Ascending aorta (tissue), 2 donors: ENCODE measurements at regions of chr20 and their contacts with region 1.

Region 1: DNA sequence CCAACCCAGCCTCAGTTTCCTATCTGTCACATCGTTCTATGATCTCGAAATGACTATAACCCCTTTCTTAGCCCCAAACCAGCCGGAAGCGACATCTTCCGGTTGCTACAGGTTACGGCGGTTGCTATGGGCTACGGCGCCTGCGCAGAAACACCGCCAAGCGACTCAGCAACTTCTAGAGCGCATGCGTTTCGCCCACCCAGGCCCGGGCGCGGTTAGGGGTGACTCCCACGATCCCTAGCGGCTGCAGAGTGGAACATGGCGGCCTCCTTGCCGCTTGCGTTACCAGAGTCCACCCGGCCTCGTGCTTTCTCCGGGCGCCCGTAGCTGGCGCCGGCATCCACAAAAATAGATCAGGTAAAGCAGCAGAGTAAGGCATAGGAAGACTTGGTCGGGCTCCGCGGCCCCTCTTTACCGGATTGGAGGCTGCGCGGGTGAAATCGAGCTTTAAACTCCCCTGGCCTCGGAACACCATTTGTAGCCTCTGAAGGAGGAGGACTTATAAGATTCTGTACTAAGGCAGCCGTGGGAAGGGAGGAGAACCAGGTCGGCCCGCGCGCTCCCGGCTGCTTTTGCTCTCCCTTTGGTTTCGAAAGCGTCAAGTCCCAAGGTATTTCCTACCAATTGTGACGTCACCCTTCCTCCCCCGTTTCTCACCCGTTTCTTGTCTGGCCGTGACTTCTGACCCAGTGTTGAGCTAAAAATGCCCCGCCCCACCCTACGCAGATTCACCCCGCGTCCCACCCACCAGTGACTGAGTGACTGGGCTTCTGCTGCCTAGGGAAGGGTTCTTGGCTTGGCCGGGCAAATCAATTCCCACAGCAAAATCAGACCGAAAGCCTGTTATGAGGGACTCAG is 3.5 kb downstream of the SDCBP2 start:
- DNase-seq: peak; percentile 90 to 99
- H3K4me3 ChIP-seq: peak overlapping the region; percentile 88
- H3K27ac ChIP-seq: peak overlapping the region; percentile 98 to 99
- H3K4me1 ChIP-seq: peaks cover 0 to 33% of the 10 kb centered on the region in 2 donors
- H3K27me3 ChIP-seq: no peaks in the 10 kb centered on the region
- CTCF ChIP-seq: peak in 2 of 3 experiments; percentile 24 to 30

Region 2: DNA sequence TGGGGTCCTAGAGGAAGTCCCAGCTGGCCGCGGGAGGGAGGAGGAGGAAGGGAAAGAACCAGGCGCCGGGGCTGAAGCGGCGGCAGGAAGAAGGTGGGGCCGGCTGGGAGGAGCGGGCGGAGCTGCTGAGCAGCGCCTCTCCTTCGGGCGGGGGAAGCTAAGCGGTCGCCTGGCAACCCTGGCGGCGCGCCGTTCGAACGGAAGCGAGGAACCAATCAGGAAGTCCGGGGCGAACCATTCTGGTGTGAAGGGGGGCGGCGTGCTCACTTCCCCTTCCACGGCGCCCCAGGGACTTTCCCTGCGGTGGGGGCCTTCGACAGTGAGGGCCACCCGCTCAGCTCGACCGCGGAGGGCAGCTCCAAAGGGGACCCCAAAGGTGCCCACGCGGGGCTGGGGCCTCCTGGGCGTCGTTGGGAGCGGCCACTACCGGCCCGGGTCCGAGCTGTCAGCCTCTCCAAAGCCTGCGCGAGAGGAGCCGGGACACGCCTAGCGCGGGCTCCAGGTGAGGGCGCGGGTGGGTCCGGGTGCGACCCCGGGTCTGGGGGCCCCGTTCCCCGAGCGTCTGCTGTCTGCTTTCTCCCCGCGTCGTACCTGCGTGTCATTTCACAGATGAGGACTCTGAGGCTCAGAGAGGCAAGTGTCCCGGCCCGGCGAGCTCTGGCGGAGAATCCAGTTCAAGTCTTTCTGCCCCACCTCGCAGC is 491.8 kb before region 1 on chr20 and contains the start of gene FAM110A:
- intact Hi-C with region 1: loop called (anchors 5 kb)
- DNase-seq: peak; percentile 87 to 97
- H3K4me3 ChIP-seq: peak within 1 kb of the TSS; percentile 90
- H3K27ac ChIP-seq: peak within 1 kb of the TSS; percentile 72 to 78
- H3K4me1 ChIP-seq: peaks cover 4 to 17% of the 10 kb centered on the region in 2 donors
- H3K27me3 ChIP-seq: no peaks in the 10 kb centered on the region
- CTCF ChIP-seq: no peak
- total RNA-seq, gene FAM110A: 9.7 TPM

Region 3: GRCh38 chr20:1118336-1119127 is 206.9 kb before region 1 on chr20 and contains the start of gene PSMF1:
- intact Hi-C with region 1: loop called (anchors 5 kb)
- DNase-seq: peak; percentile 77 to 96
- H3K4me3 ChIP-seq: peak within 1 kb of the TSS; percentile 99
- H3K27ac ChIP-seq: peak within 1 kb of the TSS; percentile 74 to 80
- H3K4me1 ChIP-seq: peaks cover 8 to 44% of the 10 kb centered on the region in 2 donors
- H3K27me3 ChIP-seq: no peaks in the 10 kb centered on the region
- CTCF ChIP-seq: peak; percentile 3 to 28 (median 10)
- total RNA-seq, gene PSMF1: 46.8 TPM

Region 4: GRCh38 chr20:1370548-1371110 is 45.2 kb after region 1 on chr20:
- intact Hi-C with region 1: loop called (anchors 5 kb)
- DNase-seq: no peak
- H3K4me3 ChIP-seq: no peak overlapping the region
- H3K27ac ChIP-seq: peak overlapping the region; percentile 26 to 67
- H3K4me1 ChIP-seq: peaks cover 9 to 30% of the 10 kb centered on the region in 2 donors
- H3K27me3 ChIP-seq: no peaks in the 10 kb centered on the region
- CTCF ChIP-seq: no peak

Region 5: DNA sequence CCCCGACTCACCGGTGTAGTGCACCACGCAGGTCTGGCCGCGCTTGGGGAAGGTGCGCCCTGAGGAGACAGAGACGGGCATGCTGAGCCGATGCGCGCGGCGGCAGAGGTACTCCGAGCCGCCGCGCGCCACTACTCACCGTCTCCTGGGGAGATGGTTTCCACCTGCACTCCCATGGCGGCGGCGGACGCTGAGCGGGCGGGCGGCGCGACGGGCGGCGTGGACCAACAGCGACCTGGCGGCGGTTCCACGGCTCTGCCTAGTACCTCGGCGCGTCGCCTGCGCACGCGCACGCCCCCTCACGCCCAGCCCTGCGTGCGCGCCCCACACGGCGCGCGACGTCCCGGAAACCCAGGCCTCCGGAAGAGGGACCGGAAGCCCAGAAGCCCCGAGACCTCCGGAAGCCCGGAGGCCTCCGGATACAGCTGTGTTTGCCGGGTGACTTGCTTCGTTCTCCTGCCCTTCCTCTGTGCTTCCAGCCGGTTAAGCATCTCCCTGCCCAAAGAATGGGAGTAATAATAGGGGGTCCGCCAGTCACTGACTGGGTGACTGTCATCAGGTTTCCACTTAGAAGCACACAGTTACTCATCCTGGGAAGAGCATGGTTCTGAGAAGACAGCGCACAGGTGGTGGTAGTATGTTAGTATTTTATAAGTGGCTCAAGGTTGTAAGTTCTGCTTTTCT is 67.6 kb after region 1 on chr20 and contains the start of gene FKBP1A:
- intact Hi-C with region 1: loop called (anchors 1 kb)
- DNase-seq: peak; percentile 51 to 94
- H3K4me3 ChIP-seq: peak within 1 kb of the TSS; percentile 80 to 92
- H3K27ac ChIP-seq: peak within 1 kb of the TSS; percentile 84 to 86
- H3K4me1 ChIP-seq: peaks cover 13 to 41% of the 10 kb centered on the region in 2 donors
- H3K27me3 ChIP-seq: no peaks in the 10 kb centered on the region
- CTCF ChIP-seq: peak in 2 of 3 experiments; percentile 13 to 19
- total RNA-seq, gene FKBP1A: 202 TPM

Region 6: GRCh38 chr20:1816384-1817381 is 491.3 kb after region 1 on chr20:
- intact Hi-C with region 1: loop called (anchors 10 kb)
- DNase-seq: no peak
- H3K4me3 ChIP-seq: peak overlapping the region in 1 of 2 donors; percentile 37
- H3K27ac ChIP-seq: peak overlapping the region; percentile 80 to 92
- H3K4me1 ChIP-seq: peaks cover 34 to 65% of the 10 kb centered on the region in 2 donors
- H3K27me3 ChIP-seq: no peaks in the 10 kb centered on the region
- CTCF ChIP-seq: no peak

Region 7: DNA sequence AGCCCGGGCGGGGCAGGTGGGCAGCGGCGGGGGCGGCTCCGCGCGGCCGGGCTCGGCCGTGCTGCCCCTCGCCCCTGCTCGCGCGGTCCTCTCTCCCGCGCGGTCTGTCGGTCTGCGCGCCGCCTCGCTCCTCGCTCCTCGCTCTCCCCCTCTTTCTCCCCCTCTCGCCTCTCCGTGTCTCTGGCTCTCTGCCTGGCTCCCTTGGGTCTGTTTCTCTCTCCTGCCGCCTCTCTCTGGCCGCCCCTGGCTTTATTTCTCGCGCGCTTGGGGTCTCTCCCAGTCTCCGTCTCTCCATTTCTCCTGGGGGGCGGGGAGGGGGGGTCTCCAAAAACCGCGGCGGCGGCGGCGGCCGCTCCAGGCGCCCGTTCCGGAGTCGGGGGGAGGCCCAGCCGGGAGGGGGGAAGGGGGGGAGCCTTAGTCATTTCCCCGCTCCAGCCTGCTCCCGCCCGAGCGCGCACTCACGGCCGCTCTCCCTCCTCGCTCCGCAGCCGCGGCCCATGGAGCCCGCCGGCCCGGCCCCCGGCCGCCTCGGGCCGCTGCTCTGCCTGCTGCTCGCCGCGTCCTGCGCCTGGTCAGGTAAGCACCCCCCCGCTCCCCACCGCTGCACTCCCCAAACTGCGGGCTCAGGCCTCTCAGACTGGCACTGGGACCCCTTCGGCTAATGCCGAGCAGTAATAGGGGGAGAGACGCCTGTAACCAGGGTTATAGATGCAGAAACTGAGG is 569.7 kb after region 1 on chr20 and contains the start of gene SIRPA:
- intact Hi-C with region 1: loop called (anchors 10 kb)
- DNase-seq: peak in 1 of 2 donors; percentile 84
- H3K4me3 ChIP-seq: peak within 1 kb of the TSS; percentile 80 to 97
- H3K27ac ChIP-seq: peak within 1 kb of the TSS; percentile 97
- H3K4me1 ChIP-seq: peaks cover 6 to 66% of the 10 kb centered on the region in 2 donors
- H3K27me3 ChIP-seq: no peaks in the 10 kb centered on the region
- CTCF ChIP-seq: no peak
- total RNA-seq, gene SIRPA: 72.8 TPM

Region 8: GRCh38 chr20:1920252-1920651 is 594.9 kb after region 1 on chr20:
- intact Hi-C with region 1: no loop called
- DNase-seq: no peak
- H3K4me3 ChIP-seq: no peak overlapping the region
- H3K27ac ChIP-seq: no peak overlapping the region
- H3K4me1 ChIP-seq: no peaks in the 10 kb centered on the region
- H3K27me3 ChIP-seq: no peaks in the 10 kb centered on the region
- CTCF ChIP-seq: no peak